Dendritic cell treated with granulocyte-macrophage colony-stimulating factor and Interleukin-4, amounts not matched to agents 40 ng/mL and 50 ng/mL, for 4 days (primary cell): ENCODE measurements at regions of chr9 and their contacts with region 1.

Region 1: GRCh38 chr9:74528207-74528606 is 31.1 kb downstream of the RORB start:
- H3K4me3 Mint-ChIP-seq: no peak overlapping the region
- H3K27ac Mint-ChIP-seq: no peak overlapping the region
- H3K4me1 Mint-ChIP-seq: no peaks in the 10 kb centered on the region
- H3K27me3 Mint-ChIP-seq: peaks cover 4% of the 10 kb centered on the region

Region 2: GRCh38 chr9:74496819-74497747 is 31.1 kb before region 1 on chr9 and contains the start of gene RORB:
- intact Hi-C with region 1: no loop called
- H3K4me3 Mint-ChIP-seq: peak within 1 kb of the TSS; percentile 83
- H3K27ac Mint-ChIP-seq: peak within 1 kb of the TSS; percentile 10
- H3K4me1 Mint-ChIP-seq: peaks cover 43% of the 10 kb centered on the region
- H3K27me3 Mint-ChIP-seq: peaks cover 71% of the 10 kb centered on the region

Region 3: GRCh38 chr9:74577956-74578355 is 49.7 kb after region 1 on chr9:
- intact Hi-C with region 1: loop called (anchors 1 kb)
- H3K4me3 Mint-ChIP-seq: no peak overlapping the region
- H3K27ac Mint-ChIP-seq: no peak overlapping the region
- H3K4me1 Mint-ChIP-seq: no peaks in the 10 kb centered on the region
- H3K27me3 Mint-ChIP-seq: peaks cover 5% of the 10 kb centered on the region